Caco-2 (cell line): ENCODE measurements at regions of chr5 and their contacts with region 1.

Region 1: DNA sequence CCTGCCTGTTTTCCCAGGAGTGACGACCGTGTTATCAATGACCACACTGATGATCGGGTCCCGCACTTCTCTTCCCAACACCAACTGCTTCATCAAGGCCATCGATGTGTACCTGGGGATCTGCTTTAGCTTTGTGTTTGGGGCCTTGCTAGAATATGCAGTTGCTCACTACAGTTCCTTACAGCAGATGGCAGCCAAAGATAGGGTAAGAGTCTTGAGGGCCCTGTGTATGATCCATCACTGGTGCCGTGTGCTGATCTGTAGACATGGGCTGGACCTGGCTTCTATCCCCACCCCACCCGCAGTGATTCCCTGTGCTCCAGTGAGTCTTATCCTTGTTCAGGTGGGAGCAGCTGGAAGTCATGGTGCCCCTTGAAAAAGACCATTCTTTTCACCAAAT is 26.0 kb downstream of the GABRP start:
- DNase-seq: peak; percentile 52 to 66
- H3K4me3 ChIP-seq: no peak overlapping the region
- H3K4me3 Mint-ChIP-seq: no peak overlapping the region
- H3K27ac Mint-ChIP-seq: no peak overlapping the region
- H3K4me1 ChIP-seq: no peaks in the 10 kb centered on the region
- H3K4me1 Mint-ChIP-seq: no peaks in the 10 kb centered on the region
- H3K27me3 ChIP-seq: no peaks in the 10 kb centered on the region
- H3K27me3 Mint-ChIP-seq: peaks cover 6% of the 10 kb centered on the region
- CTCF ChIP-seq: peak; percentile 48 to 67

Region 2: DNA sequence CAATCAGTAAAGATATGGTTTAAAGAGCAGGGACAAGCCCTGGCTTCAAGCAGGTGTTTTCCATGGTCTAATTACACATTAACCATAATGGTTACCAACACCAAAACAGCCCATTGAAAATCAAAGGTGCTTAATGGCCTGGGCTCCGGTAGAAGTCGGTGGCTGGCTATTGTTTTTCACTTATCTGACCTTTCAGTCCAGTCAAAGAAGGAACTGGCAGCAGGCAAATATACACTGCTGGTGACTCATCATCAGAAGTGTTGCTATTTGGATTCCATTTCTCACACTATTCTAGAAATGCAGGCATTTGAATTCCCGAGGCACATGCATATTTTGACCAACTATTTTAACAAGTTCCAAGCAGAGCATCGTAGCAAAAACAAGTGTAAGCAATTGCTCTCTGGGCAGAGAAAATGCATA is 52.4 kb before region 1 on chr5:
- CTCF ChIA-PET with region 1: no interaction called
- POLR2A ChIA-PET with region 1: no interaction called
- intact Hi-C with region 1: no loop called
- DNase-seq: peak in 1 of 2 experiments; percentile 39
- H3K4me3 ChIP-seq: no peak overlapping the region
- H3K4me3 Mint-ChIP-seq: no peak overlapping the region
- H3K27ac Mint-ChIP-seq: peak overlapping the region; percentile 58
- H3K4me1 ChIP-seq: peaks cover 33% of the 10 kb centered on the region
- H3K4me1 Mint-ChIP-seq: peaks cover 30% of the 10 kb centered on the region
- H3K27me3 ChIP-seq: no peaks in the 10 kb centered on the region
- H3K27me3 Mint-ChIP-seq: no peaks in the 10 kb centered on the region
- CTCF ChIP-seq: no peak

Region 3: GRCh38 chr5:170773024-170773985 is 36.2 kb before region 1 on chr5:
- CTCF ChIA-PET with region 1: no interaction called
- POLR2A ChIA-PET with region 1: no interaction called
- intact Hi-C with region 1: no loop called
- DNase-seq: no peak
- H3K4me3 ChIP-seq: no peak overlapping the region
- H3K4me3 Mint-ChIP-seq: no peak overlapping the region
- H3K27ac Mint-ChIP-seq: no peak overlapping the region
- H3K4me1 ChIP-seq: no peaks in the 10 kb centered on the region
- H3K4me1 Mint-ChIP-seq: no peaks in the 10 kb centered on the region
- H3K27me3 ChIP-seq: no peaks in the 10 kb centered on the region
- H3K27me3 Mint-ChIP-seq: no peaks in the 10 kb centered on the region
- CTCF ChIP-seq: no peak

Region 4: GRCh38 chr5:170832254-170832653 is 22.7 kb after region 1 on chr5:
- CTCF ChIA-PET with region 1: interaction called, 4 read pairs
- POLR2A ChIA-PET with region 1: no interaction called
- intact Hi-C with region 1: loop called (anchors 1 kb)
- DNase-seq: no peak
- H3K4me3 ChIP-seq: no peak overlapping the region
- H3K4me3 Mint-ChIP-seq: no peak overlapping the region
- H3K27ac Mint-ChIP-seq: no peak overlapping the region
- H3K4me1 ChIP-seq: no peaks in the 10 kb centered on the region
- H3K4me1 Mint-ChIP-seq: peaks cover 7% of the 10 kb centered on the region
- H3K27me3 ChIP-seq: no peaks in the 10 kb centered on the region
- H3K27me3 Mint-ChIP-seq: no peaks in the 10 kb centered on the region
- CTCF ChIP-seq: no peak

Region 5: GRCh38 chr5:170917113-170917512 is 107.6 kb after region 1 on chr5:
- CTCF ChIA-PET with region 1: no interaction called
- POLR2A ChIA-PET with region 1: no interaction called
- intact Hi-C with region 1: loop called (anchors 5 kb)
- DNase-seq: no peak
- H3K4me3 ChIP-seq: no peak overlapping the region
- H3K4me3 Mint-ChIP-seq: no peak overlapping the region
- H3K27ac Mint-ChIP-seq: no peak overlapping the region
- H3K4me1 ChIP-seq: no peaks in the 10 kb centered on the region
- H3K4me1 Mint-ChIP-seq: no peaks in the 10 kb centered on the region
- H3K27me3 ChIP-seq: no peaks in the 10 kb centered on the region
- H3K27me3 Mint-ChIP-seq: no peaks in the 10 kb centered on the region
- CTCF ChIP-seq: peak in 1 of 2 experiments; percentile 4

Region 6: GRCh38 chr5:171152382-171152781 is 342.8 kb after region 1 on chr5:
- CTCF ChIA-PET with region 1: interaction called, 5 read pairs
- POLR2A ChIA-PET with region 1: no interaction called
- intact Hi-C with region 1: loop called (anchors 1 kb)
- DNase-seq: peak in 1 of 2 experiments; percentile 38
- H3K4me3 ChIP-seq: no peak overlapping the region
- H3K4me3 Mint-ChIP-seq: no peak overlapping the region
- H3K27ac Mint-ChIP-seq: no peak overlapping the region
- H3K4me1 ChIP-seq: no peaks in the 10 kb centered on the region
- H3K4me1 Mint-ChIP-seq: no peaks in the 10 kb centered on the region
- H3K27me3 ChIP-seq: no peaks in the 10 kb centered on the region
- H3K27me3 Mint-ChIP-seq: no peaks in the 10 kb centered on the region
- CTCF ChIP-seq: peak; percentile 36 to 46

Region 7: DNA sequence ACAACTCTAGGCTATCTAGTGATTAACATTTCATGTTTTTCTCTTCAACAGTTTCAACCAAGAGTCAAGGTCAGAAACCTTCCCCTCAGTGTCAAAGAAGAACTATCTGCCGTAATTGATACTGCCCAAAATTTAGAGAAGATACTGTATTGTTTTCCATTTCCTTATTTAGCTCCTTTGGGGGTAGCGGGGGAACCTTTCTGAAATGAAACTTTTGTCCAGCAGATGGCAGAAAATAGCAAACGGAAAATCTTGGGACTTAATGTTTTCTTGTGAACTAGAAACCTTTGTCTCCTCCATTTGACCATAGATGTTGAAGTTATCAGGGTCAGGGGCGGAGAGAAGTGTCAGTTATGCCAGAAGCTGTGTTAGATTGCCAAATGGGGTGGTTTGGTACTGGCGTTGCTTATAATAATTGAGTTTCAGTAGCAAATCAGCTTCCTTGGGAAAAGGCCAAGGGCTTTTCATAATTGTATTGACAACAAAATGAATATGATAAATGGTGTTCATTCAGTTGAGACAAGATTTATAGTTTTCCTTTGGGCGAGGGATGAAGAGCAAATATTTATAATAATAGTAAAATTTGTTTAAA is 397.8 kb after region 1 on chr5:
- CTCF ChIA-PET with region 1: interaction called, 5 read pairs
- POLR2A ChIA-PET with region 1: no interaction called
- intact Hi-C with region 1: loop called (anchors 1 kb)
- DNase-seq: peak in 1 of 2 experiments; percentile 62
- H3K4me3 ChIP-seq: no peak overlapping the region
- H3K4me3 Mint-ChIP-seq: no peak overlapping the region
- H3K27ac Mint-ChIP-seq: no peak overlapping the region
- H3K4me1 ChIP-seq: no peaks in the 10 kb centered on the region
- H3K4me1 Mint-ChIP-seq: no peaks in the 10 kb centered on the region
- H3K27me3 ChIP-seq: no peaks in the 10 kb centered on the region
- H3K27me3 Mint-ChIP-seq: no peaks in the 10 kb centered on the region
- CTCF ChIP-seq: peak; percentile 52 to 64

Region 8: DNA sequence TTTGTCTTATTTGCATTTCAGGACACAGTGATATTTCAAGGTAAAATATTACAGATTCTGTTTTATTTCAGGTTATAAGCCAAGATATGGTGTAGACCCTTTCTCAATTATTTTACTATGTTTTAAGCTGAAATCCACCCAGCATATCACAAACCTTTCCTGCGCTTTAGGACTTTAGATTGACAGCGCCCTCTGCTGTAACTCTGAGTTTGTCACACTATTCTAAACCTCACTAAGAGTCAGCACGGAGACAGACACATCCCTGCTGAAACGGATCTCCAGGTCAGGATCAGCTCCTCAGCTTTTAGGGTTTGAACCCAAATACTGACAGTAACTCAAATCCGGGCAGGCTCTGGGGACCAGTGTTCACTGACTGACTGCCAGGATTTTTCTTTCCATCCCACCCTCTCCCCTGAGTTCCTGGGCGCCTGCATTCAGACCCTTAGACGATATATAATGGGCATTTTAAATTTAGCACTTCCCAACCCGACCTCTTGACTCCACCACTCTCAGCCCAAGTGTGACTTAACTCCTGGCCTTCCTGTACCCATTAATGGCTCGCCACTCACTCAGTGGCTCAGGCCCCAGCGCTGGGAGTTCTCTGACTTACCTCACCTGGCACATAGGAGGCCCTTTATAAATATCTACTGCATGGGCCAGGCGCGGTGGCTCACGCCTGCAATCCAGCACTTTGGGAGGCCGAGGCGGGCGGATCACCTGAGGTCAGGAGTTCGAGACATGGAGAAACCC is 533.0 kb after region 1 on chr5:
- CTCF ChIA-PET with region 1: no interaction called
- POLR2A ChIA-PET with region 1: no interaction called
- intact Hi-C with region 1: loop called (anchors 1 kb)
- DNase-seq: peak; percentile 50 to 60
- H3K4me3 ChIP-seq: no peak overlapping the region
- H3K4me3 Mint-ChIP-seq: no peak overlapping the region
- H3K27ac Mint-ChIP-seq: no peak overlapping the region
- H3K4me1 ChIP-seq: peaks cover 8% of the 10 kb centered on the region
- H3K4me1 Mint-ChIP-seq: no peaks in the 10 kb centered on the region
- H3K27me3 ChIP-seq: no peaks in the 10 kb centered on the region
- H3K27me3 Mint-ChIP-seq: no peaks in the 10 kb centered on the region
- CTCF ChIP-seq: peak; percentile 69 to 75

Region 9: DNA sequence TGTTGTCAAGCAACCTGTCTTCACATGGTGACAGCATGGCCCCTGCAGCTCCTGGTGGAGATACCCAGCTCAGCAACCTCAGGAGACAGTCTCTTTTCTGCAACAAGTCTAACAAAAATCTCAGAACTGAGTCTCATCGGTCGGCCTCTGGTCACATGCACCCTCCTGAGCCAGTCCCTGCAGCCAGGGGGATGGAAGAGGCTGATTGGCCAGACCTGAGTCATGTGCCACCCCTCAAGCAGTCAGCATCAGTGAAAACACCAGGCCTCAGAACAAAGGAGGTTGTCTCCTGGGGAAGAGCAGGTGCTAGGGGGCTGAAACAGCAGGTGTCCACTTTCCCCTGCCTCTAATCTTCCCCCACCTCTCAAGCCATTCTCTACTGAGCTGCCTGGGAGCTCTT is 1030.5 kb after region 1 on chr5:
- CTCF ChIA-PET with region 1: no interaction called
- POLR2A ChIA-PET with region 1: no interaction called
- intact Hi-C with region 1: no loop called
- DNase-seq: no peak
- H3K4me3 ChIP-seq: no peak overlapping the region
- H3K4me3 Mint-ChIP-seq: no peak overlapping the region
- H3K27ac Mint-ChIP-seq: no peak overlapping the region
- H3K4me1 ChIP-seq: no peaks in the 10 kb centered on the region
- H3K4me1 Mint-ChIP-seq: no peaks in the 10 kb centered on the region
- H3K27me3 ChIP-seq: no peaks in the 10 kb centered on the region
- H3K27me3 Mint-ChIP-seq: no peaks in the 10 kb centered on the region
- CTCF ChIP-seq: no peak